ENCODE measurements at regions of chr5 and their contacts with region 1.

Region 1: GRCh38 chr5:140141241-140141640 is 15.5 kb downstream of the IGIP start:
- DNase-seq: no peak
- H3K4me3 ChIP-seq: no peak overlapping the region
- H3K27ac ChIP-seq: no peak overlapping the region
- H3K4me1 ChIP-seq: peaks cover 8 to 22% (median 13%) of the 10 kb centered on the region in 4 donors
- H3K27me3 ChIP-seq: no peaks in the 10 kb centered on the region
- CTCF ChIP-seq: no peak
- EP300 ChIP-seq: no peak
- POLR2A ChIP-seq: no peak

Region 2: GRCh38 chr5:140073296-140073695 is 67.9 kb before region 1 on chr5:
- in situ Hi-C with region 1: no loop called
- intact Hi-C with region 1: loop called (anchors 5 kb)
- DNase-seq: no peak
- H3K4me3 ChIP-seq: no peak overlapping the region
- H3K27ac ChIP-seq: no peak overlapping the region
- H3K4me1 ChIP-seq: peaks cover 0 to 4% (median 0%) of the 10 kb centered on the region in 4 donors
- H3K27me3 ChIP-seq: peaks cover 23% of the 10 kb centered on the region
- CTCF ChIP-seq: peak; percentile 67 to 80 (median 72)
- EP300 ChIP-seq: no peak
- POLR2A ChIP-seq: no peak

Region 3: GRCh38 chr5:140107312-140108083 is 33.7 kb before region 1 on chr5:
- in situ Hi-C with region 1: no loop called
- intact Hi-C with region 1: loop called (anchors 5 kb)
- DNase-seq: peak; percentile 95
- H3K4me3 ChIP-seq: peak overlapping the region; percentile 71 to 81 (median 76)
- H3K27ac ChIP-seq: peak overlapping the region; percentile 96 to 97 (median 97)
- H3K4me1 ChIP-seq: peaks cover 6 to 36% (median 28%) of the 10 kb centered on the region in 4 donors
- H3K27me3 ChIP-seq: peaks cover 5% of the 10 kb centered on the region
- CTCF ChIP-seq: peak in 2 of 5 experiments; percentile 23 to 55
- EP300 ChIP-seq: no peak
- POLR2A ChIP-seq: peak; percentile 86

Region 4: DNA sequence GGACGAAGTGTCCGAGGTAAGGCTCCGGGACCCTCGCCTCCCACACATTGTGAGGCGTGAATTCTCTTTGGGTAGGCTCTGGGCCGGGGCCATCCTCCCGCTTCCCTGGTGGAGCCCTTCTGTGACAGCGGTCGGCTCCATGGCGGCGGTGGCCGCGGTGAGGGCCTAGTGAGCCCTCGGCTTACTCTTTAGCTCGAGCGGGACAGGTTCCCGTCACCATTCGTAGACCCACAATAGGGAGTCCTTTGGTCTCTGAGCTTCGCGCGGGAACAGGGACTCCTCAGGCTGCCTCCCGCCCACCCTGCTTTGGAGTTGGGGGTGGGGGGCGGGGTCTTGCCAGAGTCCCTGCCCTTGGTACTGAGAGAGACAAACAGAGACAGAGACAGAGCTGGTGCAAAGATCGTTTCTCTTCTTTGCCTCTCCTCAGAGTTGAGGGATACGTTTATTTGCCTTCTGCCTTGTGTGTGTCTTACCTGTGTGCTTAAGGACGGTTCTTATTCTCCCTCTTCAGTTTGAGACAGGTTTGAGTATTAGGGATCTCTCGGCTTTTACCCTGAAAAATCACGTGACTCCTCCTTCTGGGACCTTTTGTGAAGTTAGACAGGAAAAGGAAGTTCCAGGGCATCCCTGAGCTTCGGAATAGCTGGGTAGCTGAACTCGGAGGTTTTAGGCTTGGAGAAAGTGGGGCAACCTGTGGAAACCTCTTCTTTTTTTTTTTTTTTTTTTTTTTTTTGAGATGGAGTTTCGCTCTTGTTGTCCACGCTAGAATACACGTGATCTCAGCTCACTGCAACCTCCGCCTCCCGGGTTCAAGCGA is 261.2 kb after region 1 on chr5:
- in situ Hi-C with region 1: no loop called
- intact Hi-C with region 1: no loop called
- DNase-seq: peak; percentile 36
- H3K4me3 ChIP-seq: peak overlapping the region; percentile 84 to 90 (median 89)
- H3K27ac ChIP-seq: peak overlapping the region; percentile 94 to 99 (median 97)
- H3K4me1 ChIP-seq: peaks cover 18 to 48% (median 35%) of the 10 kb centered on the region in 4 donors
- H3K27me3 ChIP-seq: no peaks in the 10 kb centered on the region
- CTCF ChIP-seq: peak in 1 of 5 experiments; percentile 3
- EP300 ChIP-seq: no peak
- POLR2A ChIP-seq: no peak

Measured in transverse colon (tissue), 4 donors.